HAP-1 (cell line): ENCODE measurements at regions of chr17 and their contacts with region 1.

Region 1: DNA sequence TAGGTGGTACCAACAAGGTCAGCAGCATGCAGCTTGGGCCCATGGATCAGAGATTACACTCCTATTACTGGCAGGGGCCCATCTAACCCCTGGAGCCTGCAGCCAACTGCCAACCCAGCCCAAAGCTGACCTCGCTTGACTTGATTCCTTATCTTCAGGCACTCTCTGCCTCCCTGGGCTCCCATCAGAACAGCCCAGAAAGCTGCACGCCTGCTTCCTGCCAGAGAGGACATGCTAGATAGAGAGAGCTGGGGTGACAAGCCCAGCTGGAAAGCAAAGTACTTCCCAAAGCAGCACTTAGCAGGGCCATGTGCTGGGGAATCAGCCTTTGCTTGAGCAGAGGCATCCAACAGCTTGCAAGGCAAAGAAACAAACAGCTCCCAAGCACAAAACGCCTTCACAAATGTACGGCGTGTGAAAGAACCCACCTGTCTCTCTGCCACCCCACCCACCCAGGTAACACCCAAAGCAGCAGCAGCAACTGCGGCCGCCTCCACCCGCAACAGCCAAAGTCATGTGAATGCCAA is 74.2 kb upstream of the NLK start:
- DNase-seq: no peak
- H3K4me3 ChIP-seq: no peak overlapping the region
- H3K4me1 ChIP-seq: no peaks in the 10 kb centered on the region
- H3K27me3 ChIP-seq: no peaks in the 10 kb centered on the region

Region 2: DNA sequence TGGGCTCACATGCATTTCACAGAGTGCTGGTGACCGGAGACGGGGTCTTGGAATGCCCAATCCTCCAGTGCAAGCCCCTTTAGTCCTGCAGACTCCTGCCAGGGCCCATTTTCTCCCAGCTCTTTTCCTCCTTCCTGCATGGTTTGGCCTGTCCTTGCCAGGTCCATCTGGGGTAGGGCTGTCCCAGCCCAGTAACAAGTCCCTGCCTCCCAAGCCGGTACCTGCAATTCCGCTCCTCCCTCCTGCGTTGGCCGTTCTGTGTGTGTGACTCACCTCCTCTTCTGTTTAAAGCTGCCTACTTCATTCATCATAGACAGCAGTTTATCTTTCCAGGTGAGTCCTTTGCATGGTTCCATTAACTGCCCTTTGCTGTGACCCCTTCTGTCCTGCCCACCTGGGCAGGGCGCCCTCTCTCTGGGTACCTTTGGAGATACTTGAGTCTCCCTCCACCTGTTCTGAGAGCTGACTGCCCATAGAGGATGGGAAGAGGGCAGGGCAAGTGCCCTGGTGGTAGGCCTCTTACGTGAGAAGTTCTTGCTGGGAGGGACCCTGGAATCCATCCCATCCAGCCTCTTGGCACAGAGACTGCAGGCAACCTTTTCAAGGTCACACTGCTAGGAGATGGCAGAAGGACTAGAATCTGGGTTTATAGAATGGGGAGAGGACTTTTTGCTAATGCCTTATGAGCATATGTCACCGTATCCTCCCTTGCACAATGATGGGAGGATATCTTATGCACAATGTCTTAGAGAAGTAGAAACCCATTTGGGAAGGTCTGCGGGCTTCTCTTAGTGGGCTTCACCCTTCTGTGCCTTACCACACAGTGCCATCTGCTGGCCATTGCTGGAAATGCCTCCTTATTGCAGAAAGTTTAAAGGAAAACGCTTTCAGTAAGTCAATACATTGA is 366.9 kb before region 1 on chr17:
- in situ Hi-C with region 1: no loop called
- DNase-seq: peak; percentile 68 to 90
- H3K4me3 ChIP-seq: no peak overlapping the region
- H3K4me1 ChIP-seq: no peaks in the 10 kb centered on the region
- H3K27me3 ChIP-seq: no peaks in the 10 kb centered on the region

Region 3: DNA sequence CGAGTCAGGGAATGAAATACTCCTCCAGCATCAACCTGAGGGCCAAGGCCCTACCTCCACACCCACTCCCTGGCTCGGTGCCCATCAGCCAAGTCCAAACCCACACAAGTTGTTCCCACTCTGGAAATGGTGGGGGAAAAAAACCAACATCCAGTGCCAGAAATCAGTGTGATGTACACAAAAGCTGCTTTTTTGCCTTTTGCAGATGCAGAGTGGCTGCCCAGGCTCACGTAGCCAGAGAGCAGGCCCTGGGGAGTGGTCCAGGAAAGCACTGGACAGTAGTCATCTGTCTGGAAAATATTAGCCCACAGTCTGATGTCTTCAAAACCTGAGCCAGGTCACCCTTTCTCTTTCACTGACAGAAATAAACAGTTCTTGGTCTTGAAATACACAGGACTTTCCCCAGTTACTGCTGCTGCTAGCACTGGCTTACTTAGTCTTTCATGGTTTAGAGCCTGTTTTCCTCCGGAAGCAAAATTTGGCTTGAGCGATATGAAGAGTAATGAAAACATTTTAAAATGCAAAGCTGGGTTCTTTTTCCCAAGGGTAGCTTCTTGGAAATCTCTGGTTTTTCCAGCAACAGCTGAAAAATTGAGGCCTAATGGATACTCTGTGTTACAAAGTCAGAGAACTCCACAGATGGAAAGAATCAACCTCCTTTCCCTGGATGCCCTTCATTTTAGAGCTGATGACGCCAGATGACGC is 149.7 kb before region 1 on chr17:
- in situ Hi-C with region 1: no loop called
- DNase-seq: no peak
- H3K4me3 ChIP-seq: no peak overlapping the region
- H3K4me1 ChIP-seq: no peaks in the 10 kb centered on the region
- H3K27me3 ChIP-seq: no peaks in the 10 kb centered on the region

Region 4: GRCh38 chr17:28029044-28029443 is 60.8 kb after region 1 on chr17:
- in situ Hi-C with region 1: loop called (anchors 10 kb)
- DNase-seq: no peak
- H3K4me3 ChIP-seq: no peak overlapping the region
- H3K4me1 ChIP-seq: no peaks in the 10 kb centered on the region
- H3K27me3 ChIP-seq: no peaks in the 10 kb centered on the region

Region 5: GRCh38 chr17:28086519-28086918 is 118.2 kb after region 1 on chr17:
- in situ Hi-C with region 1: no loop called
- DNase-seq: no peak
- H3K4me3 ChIP-seq: no peak overlapping the region
- H3K4me1 ChIP-seq: peaks cover 18% of the 10 kb centered on the region
- H3K27me3 ChIP-seq: no peaks in the 10 kb centered on the region